ENCODE measurements at regions of chr5 and their contacts with region 1.

Region 1: DNA sequence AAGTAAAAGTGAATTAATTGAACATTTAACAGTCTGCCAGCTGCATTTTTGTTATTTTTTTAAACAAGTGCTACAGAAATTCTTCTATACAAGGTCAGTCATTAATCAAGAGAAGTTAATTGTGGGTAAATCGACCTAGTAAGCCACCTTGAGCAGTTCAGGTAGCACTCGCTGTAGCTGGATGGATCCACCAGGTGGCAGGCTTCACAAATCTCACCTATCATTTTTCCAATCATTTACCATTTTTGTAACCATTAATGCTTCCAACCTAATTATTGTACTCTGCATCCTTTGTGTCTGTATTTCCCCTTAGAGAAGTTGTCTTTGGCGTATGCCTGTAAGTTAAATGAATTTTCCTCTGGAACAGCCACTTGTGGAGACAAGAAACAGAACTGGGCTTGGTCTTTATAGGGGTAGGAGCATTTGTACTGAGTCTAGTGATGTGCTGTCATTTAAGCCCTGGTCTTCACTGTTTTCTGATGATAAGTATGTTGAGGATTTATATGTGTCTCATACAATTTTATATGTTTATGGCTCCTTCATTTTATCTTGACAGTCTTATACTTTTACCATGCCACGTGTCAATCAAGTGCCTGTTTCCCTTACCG is 39.5 kb downstream of the CD180 start:
- DNase-seq: peak; percentile 40
- ATAC-seq: no peak

Region 2: DNA sequence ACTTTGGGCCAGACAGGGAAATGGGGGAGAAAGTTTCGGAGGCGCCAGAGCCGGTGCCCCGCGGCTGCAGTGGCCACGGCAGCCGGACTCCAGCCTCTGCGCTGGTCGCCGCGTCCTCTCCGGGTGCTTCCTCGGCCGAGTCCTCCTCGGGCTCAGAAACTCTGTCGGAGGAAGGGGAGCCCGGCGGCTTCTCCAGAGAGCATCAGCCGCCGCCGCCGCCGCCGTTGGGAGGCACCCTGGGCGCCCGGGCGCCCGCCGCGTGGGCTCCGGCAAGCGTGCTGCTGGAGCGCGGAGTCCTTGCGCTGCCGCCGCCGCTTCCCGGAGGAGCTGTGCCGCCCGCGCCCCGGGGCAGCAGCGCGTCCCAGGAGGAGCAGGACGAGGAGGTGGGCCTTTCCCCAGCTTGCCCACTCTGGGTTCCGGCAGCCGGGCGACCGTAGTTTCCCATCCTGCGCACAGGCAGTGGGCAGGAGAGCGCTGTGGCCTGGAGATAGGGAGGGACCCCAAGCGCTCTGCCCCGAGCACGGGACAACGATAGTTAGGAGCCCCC is 560.4 kb before region 1 on chr5:
- intact Hi-C with region 1: no loop called
- DNase-seq: peak; percentile 53
- ATAC-seq: peak; percentile 43

Region 3: GRCh38 chr5:67021521-67021920 is 135.6 kb before region 1 on chr5:
- intact Hi-C with region 1: no loop called
- DNase-seq: no peak
- ATAC-seq: no peak

Region 4: GRCh38 chr5:67209142-67209771 is 52.2 kb after region 1 on chr5:
- intact Hi-C with region 1: loop called (anchors 10 kb)
- DNase-seq: no peak
- ATAC-seq: peak; percentile 79